Heart left ventricle (tissue), 16 donors: ENCODE measurements at regions of chr3 and their contacts with region 1.

Region 1: GRCh38 chr3:4963669-4964589 is 15.3 kb upstream of the BHLHE40 start:
- DNase-seq: no peak
- ATAC-seq: no peak
- H3K4me3 ChIP-seq: no peak overlapping the region
- H3K27ac ChIP-seq: no peak overlapping the region
- H3K4me1 ChIP-seq: no peaks in the 10 kb centered on the region
- H3K27me3 ChIP-seq: no peaks in the 10 kb centered on the region
- CTCF ChIP-seq: no peak
- POLR2A ChIP-seq: no peak

Region 2: DNA sequence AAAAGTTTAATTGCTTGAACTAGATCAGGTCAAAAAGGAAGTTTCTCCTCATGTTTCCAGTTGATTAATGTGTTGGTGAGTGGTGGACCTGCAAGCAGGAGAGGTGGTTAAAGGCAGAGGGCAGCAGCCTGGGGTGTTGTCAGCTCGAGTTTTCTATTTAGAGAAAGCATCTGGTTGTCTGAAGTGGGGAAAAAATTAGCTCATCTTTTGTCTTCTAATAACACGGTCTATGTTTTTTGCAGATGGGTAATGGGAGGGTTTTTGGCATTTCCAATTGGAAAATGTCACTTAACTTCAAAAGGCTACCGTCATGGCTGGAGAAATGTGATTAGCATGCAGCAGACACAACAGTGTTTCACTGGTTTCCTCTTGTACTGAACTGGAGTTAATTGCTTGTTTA is 348.2 kb before region 1 on chr3:
- intact Hi-C with region 1: no loop called
- DNase-seq: no peak
- ATAC-seq: peak; percentile 61 to 84 (median 74)
- H3K4me3 ChIP-seq: no peak overlapping the region
- H3K27ac ChIP-seq: peak overlapping the region in 4 of 12 donors; percentile 3 to 38 (median 12)
- H3K4me1 ChIP-seq: peaks cover 0 to 16% (median 1%) of the 10 kb centered on the region in 12 donors
- H3K27me3 ChIP-seq: no peaks in the 10 kb centered on the region
- CTCF ChIP-seq: peak in 1 of 12 donors; percentile 17
- POLR2A ChIP-seq: no peak

Region 3: GRCh38 chr3:4741404-4742307 is 222.3 kb before region 1 on chr3:
- intact Hi-C with region 1: no loop called
- DNase-seq: peak in 4 of 5 donors; percentile 59 to 79 (median 72)
- ATAC-seq: peak; percentile 73 to 89 (median 88)
- H3K4me3 ChIP-seq: peak overlapping the region in 1 of 12 donors; percentile 24
- H3K27ac ChIP-seq: peak overlapping the region; percentile 59 to 97 (median 85)
- H3K4me1 ChIP-seq: peaks cover 9 to 77% (median 41%) of the 10 kb centered on the region in 12 donors
- H3K27me3 ChIP-seq: no peaks in the 10 kb centered on the region
- CTCF ChIP-seq: no peak
- POLR2A ChIP-seq: peak in 1 of 2 donors; percentile 21

Region 4: DNA sequence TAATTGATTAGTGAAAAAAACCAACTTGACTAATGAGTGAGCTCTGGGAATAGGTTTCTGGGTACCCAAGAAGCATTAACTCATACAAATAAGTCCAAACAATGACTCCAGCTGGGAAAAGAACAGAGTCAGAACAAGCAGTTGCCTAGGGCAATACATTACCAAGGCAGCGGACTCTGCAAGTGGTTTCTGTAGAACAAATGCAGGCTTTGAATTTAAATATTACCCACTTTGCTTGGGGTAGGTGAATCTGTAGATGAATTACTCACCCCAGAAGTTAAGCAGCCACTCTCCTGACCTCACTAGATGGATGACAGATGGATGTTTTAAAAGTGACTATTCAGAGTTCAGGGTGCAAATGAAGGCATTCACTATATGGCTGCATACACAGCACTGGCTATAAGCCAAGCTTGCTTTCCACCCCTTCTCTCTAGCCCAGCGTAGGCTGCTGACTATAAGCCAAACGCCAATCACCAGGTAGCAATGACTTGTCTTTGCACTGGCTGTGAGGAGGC is 57.8 kb before region 1 on chr3:
- intact Hi-C with region 1: loop called in 1 of 10 experiments (anchors 10 kb)
- DNase-seq: no peak
- ATAC-seq: no peak
- H3K4me3 ChIP-seq: no peak overlapping the region
- H3K27ac ChIP-seq: no peak overlapping the region
- H3K4me1 ChIP-seq: peaks cover 0 to 21% (median 0%) of the 10 kb centered on the region in 12 donors
- H3K27me3 ChIP-seq: no peaks in the 10 kb centered on the region
- CTCF ChIP-seq: no peak
- POLR2A ChIP-seq: no peak